Right cardiac atrium (tissue), 5 donors: ENCODE measurements at regions of chr6 and their contacts with region 1.

Region 1: GRCh38 chr6:87929843-87930288 is 117.8 kb upstream of the SPACA1 start:
- DNase-seq: peak; percentile 79 to 93 (median 86)
- ATAC-seq: peak; percentile 97 to 99
- H3K4me3 ChIP-seq: no peak overlapping the region
- H3K27ac ChIP-seq: no peak overlapping the region
- H3K4me1 ChIP-seq: no peaks in the 10 kb centered on the region
- H3K27me3 ChIP-seq: no peaks in the 10 kb centered on the region

Region 2: GRCh38 chr6:87870556-87870955 is 59.3 kb before region 1 on chr6:
- intact Hi-C with region 1: no loop called
- DNase-seq: no peak
- ATAC-seq: no peak
- H3K4me3 ChIP-seq: no peak overlapping the region
- H3K27ac ChIP-seq: no peak overlapping the region
- H3K4me1 ChIP-seq: no peaks in the 10 kb centered on the region
- H3K27me3 ChIP-seq: no peaks in the 10 kb centered on the region

Region 3: DNA sequence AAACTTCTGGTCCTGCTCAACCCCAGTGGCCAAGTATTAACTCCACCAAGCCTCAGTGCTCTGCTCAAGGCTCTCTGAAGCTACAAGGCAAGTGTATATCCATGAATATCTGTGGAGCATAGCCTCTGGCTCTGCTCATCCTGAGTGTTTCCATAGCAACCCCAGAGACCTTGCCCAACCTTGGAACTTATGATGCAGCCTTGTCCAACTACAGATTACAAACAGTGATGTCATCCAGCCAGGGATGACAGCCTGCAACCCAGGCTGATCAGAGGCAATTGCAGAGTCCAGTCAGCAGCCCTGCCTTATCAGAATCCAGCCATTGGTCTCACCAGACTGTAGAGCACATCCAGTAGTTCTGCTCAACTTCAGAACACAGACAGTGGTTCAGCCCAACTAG is 52.3 kb after region 1 on chr6:
- intact Hi-C with region 1: no loop called
- DNase-seq: no peak
- ATAC-seq: no peak
- H3K4me3 ChIP-seq: no peak overlapping the region
- H3K27ac ChIP-seq: no peak overlapping the region
- H3K4me1 ChIP-seq: no peaks in the 10 kb centered on the region
- H3K27me3 ChIP-seq: no peaks in the 10 kb centered on the region

Region 4: DNA sequence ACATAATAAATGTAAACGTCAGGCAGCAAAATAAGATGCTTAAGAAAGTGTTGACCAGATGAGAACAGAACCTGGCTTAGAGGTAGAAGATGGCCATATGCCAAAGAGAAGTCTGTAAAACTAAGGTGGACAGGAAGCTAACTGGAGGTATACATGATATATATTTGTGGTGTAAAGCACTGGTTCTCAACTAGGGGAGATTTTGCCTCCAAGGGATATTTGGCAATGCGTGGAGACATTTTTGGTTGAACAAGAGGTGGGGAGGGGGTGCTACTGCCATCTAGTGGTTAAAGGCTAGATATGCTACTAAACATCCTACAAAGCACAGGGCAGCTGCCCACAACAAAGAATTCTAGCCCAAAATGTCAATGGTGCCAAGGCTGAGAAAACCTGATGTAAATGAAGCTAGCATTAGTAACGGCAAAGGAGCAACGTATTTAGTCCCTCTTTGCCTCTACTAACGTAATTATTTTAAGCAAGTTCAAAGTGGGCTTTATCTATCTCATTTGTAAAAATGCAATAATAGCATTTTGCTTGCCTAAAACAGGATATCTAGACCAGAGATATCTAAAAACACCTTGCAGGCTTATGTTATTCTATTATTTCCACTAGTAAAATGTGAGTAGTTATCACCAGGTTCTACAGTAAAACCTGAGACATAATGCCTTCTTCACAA is 851.0 kb after region 1 on chr6:
- intact Hi-C with region 1: loop called in 1 of 4 experiments (anchors 10 kb)
- DNase-seq: no peak
- ATAC-seq: peak; percentile 38 to 65
- H3K4me3 ChIP-seq: no peak overlapping the region
- H3K27ac ChIP-seq: no peak overlapping the region
- H3K4me1 ChIP-seq: no peaks in the 10 kb centered on the region
- H3K27me3 ChIP-seq: no peaks in the 10 kb centered on the region

Region 5: GRCh38 chr6:88870717-88871330 is 941.0 kb after region 1 on chr6:
- intact Hi-C with region 1: loop called in 3 of 4 experiments (anchors 5 to 10 kb)
- DNase-seq: no peak
- ATAC-seq: peak in 1 of 2 donors; percentile 35
- H3K4me3 ChIP-seq: no peak overlapping the region
- H3K27ac ChIP-seq: no peak overlapping the region
- H3K4me1 ChIP-seq: no peaks in the 10 kb centered on the region
- H3K27me3 ChIP-seq: no peaks in the 10 kb centered on the region